Right ventricle myocardium superior (tissue), 1 donor: ENCODE measurements at regions of chr2 and their contacts with region 1.

Region 1: DNA sequence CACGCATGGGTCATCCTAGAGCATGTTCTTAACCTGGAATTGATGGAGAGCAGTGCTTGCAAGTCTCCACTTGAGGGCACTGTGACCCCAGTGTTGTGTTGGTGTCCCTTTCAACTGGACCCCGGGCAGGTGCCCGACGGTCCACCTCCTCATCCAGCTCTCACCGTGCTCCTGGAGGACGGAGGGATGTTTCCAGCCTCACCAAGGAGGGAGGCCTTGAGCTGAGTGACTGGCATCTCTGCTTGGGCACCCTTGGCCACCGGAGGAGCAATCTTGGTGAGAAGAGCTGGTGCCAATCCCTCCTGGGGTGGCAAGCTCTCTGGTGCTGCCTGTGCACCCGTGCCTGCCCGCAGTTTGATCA is 45.4 kb upstream of the ASB18 start:
- DNase-seq: no peak
- ATAC-seq: no peak

Region 2: DNA sequence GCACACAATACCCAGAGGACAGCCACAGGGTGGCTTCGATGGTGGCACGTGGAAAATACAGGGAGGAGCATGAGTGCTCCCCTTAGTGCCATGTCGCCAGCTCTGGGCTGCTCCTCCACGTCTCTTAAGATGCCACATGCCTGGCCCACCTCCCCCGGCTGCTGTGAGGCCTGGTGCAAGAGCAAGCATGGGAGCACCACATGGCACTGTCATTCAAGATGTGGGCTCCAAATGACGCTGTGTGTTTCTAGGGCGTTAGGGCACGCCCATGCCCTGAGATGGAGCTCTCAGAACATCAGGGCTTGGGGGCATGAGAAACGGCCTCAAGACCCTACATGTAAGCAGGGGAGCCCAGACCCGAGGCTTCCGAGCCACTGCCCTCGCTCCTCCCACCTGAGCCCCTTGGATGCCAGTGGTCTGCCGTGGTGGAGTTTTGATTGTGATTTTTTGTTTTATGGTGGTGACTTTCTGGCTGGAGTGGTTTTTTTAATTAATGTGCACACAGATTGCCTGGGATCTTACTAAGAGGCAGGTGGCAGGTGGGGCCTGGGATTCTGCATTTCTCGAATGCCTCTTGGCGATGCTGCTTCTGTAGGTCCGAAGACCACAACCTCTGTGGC is 380.8 kb before region 1 on chr2:
- intact Hi-C with region 1: no loop called
- DNase-seq: no peak
- ATAC-seq: no peak

Region 3: GRCh38 chr2:236631281-236631855 is 321.7 kb after region 1 on chr2:
- intact Hi-C with region 1: loop called (anchors 5 kb)
- DNase-seq: no peak
- ATAC-seq: peak; percentile 70